Common myeloid progenitor, CD34-positive (primary cell): ENCODE measurements at regions of chr12 and their contacts with region 1.

Region 1: DNA sequence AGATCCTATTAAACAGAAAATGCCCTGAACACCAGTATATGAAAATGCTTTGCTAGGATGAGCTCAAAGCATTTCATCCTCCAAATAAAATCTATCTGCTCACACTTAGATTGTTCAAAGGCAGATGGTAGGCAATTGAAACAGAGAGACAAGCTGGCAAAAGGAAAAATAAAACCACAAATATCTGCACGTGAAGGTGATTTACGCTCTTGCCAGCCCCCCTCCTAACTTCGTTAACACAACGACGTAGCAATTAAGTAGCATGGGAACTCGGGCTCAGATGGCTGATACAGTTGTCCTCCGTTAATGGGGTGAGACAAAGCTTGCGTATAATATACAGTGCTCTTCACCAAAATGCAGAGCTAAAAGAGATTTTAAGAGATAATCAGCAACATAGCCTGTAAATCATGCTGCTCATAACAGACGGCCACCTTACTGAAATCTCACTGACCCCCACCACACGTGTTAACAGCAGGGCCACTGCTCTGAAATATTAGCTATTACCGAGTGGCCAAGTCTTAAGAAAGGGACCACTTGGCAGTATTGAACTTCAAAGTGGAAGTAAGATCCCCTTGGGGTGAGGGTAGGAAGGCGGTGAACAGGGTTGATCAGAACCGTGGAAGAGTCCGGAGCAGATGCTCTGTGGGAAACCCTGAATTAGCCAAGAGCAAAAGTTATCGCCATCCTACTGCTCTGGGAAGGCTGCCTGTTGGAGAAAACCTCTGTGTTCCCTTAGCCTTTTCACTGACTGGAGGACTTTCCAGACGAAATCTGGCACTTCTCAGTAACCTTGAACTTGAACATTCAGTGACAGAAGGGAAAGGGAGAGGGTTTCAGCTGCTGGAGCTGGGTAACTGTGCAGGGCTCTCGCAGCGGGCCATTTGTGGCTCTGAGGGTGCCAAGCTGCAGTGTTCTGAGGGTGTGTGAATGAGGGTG is 23.1 kb downstream of the ETV6 start:
- DNase-seq: peak in 2 of 3 donors; percentile 47 to 64
- H3K4me3 ChIP-seq: peak overlapping the region in 4 of 7 experiments; percentile 21 to 56 (median 38)
- H3K27ac ChIP-seq: peak overlapping the region; percentile 3 to 16
- H3K4me1 ChIP-seq: peaks cover 44 to 94% (median 77%) of the 10 kb centered on the region in 4 experiments
- H3K27me3 ChIP-seq: no peaks in the 10 kb centered on the region

Region 2: DNA sequence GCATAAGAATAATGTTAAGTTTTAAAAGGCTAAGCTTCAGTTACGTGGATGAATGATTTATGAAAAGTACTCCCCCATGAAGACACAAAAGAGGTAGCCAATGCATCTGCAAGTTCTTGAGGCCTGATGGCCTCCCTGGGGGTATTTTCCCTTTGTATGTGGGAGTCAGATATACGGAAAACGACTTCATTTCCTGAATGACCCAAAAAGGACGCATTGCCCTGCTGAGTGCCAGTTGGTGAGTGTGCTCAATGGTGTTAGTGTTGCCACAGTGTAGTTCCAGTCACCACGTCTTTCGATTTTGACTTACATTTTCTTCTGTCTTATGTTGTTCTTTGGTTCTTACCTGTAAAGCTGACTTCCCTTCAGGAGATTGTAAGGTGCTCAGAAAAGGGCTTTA is 15.0 kb before region 1 on chr12:
- CTCF ChIA-PET with region 1: interaction called, 22 read pairs
- POLR2A ChIA-PET with region 1: interaction called, 3 read pairs
- DNase-seq: peak in 2 of 3 donors; percentile 55 to 66
- H3K4me3 ChIP-seq: peak overlapping the region in 1 of 7 experiments; percentile 43
- H3K27ac ChIP-seq: peak overlapping the region in 1 of 2 experiments; percentile 2
- H3K4me1 ChIP-seq: peaks cover 46 to 94% (median 91%) of the 10 kb centered on the region in 4 experiments
- H3K27me3 ChIP-seq: no peaks in the 10 kb centered on the region